GM10248 (cell line): ENCODE measurements at regions of chr9 and their contacts with region 1.

Region 1: DNA sequence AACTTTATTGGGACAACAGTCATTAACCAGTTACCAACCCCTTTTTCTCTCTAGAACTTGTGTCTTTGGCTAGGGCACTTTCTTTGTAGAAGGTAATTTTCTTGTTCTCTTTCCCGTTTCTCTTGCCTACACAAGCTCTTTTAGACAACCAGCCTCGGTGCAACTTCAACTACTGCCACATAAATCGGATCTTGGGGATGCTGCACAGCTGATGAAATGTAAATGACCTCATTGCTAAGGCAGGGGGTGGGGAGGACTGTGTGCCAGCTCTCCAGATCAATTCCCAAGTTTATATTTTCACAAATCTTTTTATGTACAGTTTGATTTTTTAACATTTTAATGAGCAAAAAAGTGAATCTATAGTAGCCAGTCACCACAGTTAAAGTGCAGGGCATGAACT is 157.6 kb downstream of the DENND1A start:
- DNase-seq: no peak
- CTCF ChIP-seq: no peak

Region 2: GRCh38 chr9:123761905-123762605 is 10.3 kb before region 1 on chr9:
- CTCF ChIA-PET with region 1: interaction called, 10 read pairs
- POLR2A ChIA-PET with region 1: no interaction called
- DNase-seq: no peak
- CTCF ChIP-seq: no peak

Region 3: DNA sequence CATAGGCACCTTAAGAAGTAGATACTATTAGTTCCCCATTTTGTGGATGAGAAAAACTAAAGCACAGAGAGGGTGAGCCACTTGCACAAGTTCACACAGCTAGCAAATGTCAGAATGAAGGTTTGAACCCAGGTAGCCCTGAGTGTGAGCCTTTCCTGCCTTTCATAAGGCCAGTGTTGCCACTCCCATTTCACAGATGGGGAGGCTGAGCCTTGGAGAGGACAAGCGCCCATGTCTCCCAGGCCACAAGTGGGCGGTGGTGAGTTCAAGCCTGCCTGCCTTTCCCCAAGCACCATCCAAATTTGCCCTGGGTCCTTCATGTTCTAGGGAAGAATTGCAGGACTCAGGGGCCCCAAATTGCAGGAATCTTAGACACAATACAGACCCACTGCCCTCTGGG is 289.8 kb after region 1 on chr9:
- CTCF ChIA-PET with region 1: no interaction called
- POLR2A ChIA-PET with region 1: no interaction called
- DNase-seq: no peak
- CTCF ChIP-seq: peak; percentile 32